ENCODE measurements at regions of chr10 and their contacts with region 1.

Region 1: DNA sequence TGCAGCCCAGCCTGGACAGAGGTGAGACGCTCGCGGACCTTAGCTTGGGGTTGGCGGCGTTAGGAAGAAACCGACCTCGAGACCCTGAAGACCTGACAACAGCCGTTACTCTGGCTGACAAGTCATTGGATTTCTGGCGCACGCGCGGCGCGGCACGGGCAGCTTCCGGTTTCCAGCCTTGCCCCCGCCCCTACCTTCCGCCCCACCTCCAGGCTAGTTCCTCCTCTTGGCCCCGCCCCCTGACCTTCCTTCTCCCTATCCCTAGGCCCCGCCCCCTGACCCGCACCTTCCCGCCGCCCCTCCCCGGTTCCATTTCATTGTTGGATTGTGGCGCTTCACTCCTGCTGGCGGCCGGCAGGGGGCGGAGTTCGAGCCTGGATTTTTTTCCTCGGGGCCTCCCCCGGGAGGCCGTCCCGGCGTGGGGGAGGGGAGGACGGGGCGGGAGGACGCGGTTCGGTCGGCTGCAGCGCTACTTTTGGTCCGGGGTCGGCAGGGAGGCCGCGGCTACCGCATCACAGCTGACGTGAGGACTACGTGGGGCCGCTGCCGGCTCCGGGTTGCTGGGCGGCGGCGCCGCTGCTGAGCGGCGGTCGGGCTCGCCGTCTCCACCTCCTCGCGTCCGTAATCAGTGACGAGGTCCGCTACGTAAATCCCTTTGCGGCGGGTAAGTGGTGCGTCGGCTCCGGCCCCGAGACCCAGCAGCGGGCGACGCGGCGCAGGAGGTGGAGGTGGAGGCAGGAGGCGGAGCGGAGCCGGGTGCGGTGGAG is at the start of gene CREM:
- DNase-seq: peak; percentile 99 to 100 (median 100)
- ATAC-seq: peak; percentile 95 to 97 (median 96)
- H3K4me3 ChIP-seq: peak within 1 kb of the TSS; percentile 68 to 91 (median 84)
- H3K27ac ChIP-seq: peak within 1 kb of the TSS; percentile 97 to 100 (median 100)
- H3K4me1 ChIP-seq: peaks cover 0 to 44% (median 7%) of the 10 kb centered on the region in 12 donors
- H3K27me3 ChIP-seq: no peaks in the 10 kb centered on the region
- CTCF ChIP-seq: peak; percentile 71 to 96 (median 88)
- POLR2A ChIP-seq: peak; percentile 97 to 100
- total RNA-seq, gene CREM: 44.7 to 66.5 (median 54.7) TPM

Region 2: DNA sequence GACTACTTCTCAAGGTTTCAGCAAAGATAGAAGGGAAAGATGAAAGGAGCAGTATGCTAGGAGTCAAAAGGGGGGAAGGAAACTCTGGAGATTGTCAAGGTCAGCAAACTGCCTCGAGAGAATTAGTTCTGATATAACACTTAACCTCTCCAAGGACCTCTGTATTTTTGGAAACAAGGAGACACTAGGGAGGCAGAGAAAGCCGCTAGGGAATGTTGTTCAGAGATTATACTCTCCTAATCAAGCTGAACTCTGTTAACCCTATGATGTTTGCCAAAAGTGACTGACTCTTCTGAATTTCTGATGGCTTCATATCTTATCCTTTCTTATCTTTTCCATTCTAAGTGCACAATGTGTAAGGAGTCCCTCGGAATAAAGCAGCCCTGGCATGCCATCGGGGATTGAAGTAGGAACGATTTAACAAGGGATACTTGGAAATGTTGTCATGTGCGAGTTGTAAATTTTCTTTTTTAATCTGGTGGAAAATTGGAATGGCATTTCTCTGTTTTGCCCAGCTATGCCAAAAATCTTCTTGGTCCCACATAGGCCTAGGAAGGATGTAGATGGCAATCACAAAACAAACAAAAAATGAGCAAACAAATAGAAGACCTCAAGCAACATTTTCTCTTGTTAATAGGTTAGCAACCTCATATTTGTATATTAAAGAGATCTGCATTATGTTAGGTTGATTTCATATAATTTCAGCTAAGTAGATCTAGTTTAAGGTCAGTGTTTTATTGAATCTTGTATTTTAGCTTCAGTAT is 27.2 kb after region 1 on chr10:
- intact Hi-C with region 1: loop called in 1 of 10 experiments (anchors 2 kb)
- DNase-seq: no peak
- ATAC-seq: peak; percentile 55 to 93 (median 82)
- H3K4me3 ChIP-seq: no peak overlapping the region
- H3K27ac ChIP-seq: peak overlapping the region; percentile 4 to 85 (median 64)
- H3K4me1 ChIP-seq: peaks cover 0 to 28% (median 10%) of the 10 kb centered on the region in 12 donors
- H3K27me3 ChIP-seq: no peaks in the 10 kb centered on the region
- CTCF ChIP-seq: no peak
- POLR2A ChIP-seq: no peak

Region 3: GRCh38 chr10:35195361-35196306 is 68.9 kb after region 1 on chr10:
- intact Hi-C with region 1: loop called (anchors 1 to 5 kb)
- DNase-seq: peak in 4 of 5 donors; percentile 80 to 86 (median 85)
- ATAC-seq: peak; percentile 80 to 90 (median 88)
- H3K4me3 ChIP-seq: peak overlapping the region in 11 of 12 donors; percentile 35 to 63 (median 53)
- H3K27ac ChIP-seq: peak overlapping the region; percentile 89 to 99 (median 92)
- H3K4me1 ChIP-seq: peaks cover 0 to 52% (median 15%) of the 10 kb centered on the region in 12 donors
- H3K27me3 ChIP-seq: no peaks in the 10 kb centered on the region
- CTCF ChIP-seq: peak; percentile 70 to 93 (median 86)
- POLR2A ChIP-seq: peak in 1 of 2 donors; percentile 23

Region 4: GRCh38 chr10:35218339-35218955 is 91.7 kb after region 1 on chr10:
- intact Hi-C with region 1: loop called in 6 of 10 experiments (anchors 2 kb)
- DNase-seq: peak; percentile 79 to 89 (median 82)
- ATAC-seq: peak in 3 of 4 donors; percentile 64 to 77 (median 71)
- H3K4me3 ChIP-seq: no peak overlapping the region
- H3K27ac ChIP-seq: peak overlapping the region in 10 of 12 donors; percentile 32 to 87 (median 63)
- H3K4me1 ChIP-seq: peaks cover 0 to 32% (median 20%) of the 10 kb centered on the region in 12 donors
- H3K27me3 ChIP-seq: no peaks in the 10 kb centered on the region
- CTCF ChIP-seq: peak; percentile 75 to 89 (median 84)
- POLR2A ChIP-seq: no peak

Region 5: GRCh38 chr10:35236739-35237138 is 110.0 kb after region 1 on chr10:
- intact Hi-C with region 1: no loop called
- DNase-seq: no peak
- ATAC-seq: no peak
- H3K4me3 ChIP-seq: no peak overlapping the region
- H3K27ac ChIP-seq: no peak overlapping the region
- H3K4me1 ChIP-seq: no peaks in the 10 kb centered on the region
- H3K27me3 ChIP-seq: no peaks in the 10 kb centered on the region
- CTCF ChIP-seq: peak in 10 of 12 donors; percentile 19 to 50 (median 38)
- POLR2A ChIP-seq: no peak

Measured in heart left ventricle (tissue), 16 donors.